CD4-positive, alpha-beta T cell (primary cell): ENCODE measurements at regions of chr16 and their contacts with region 1.

Region 1: GRCh38 chr16:50210266-50211038 is 55.9 kb upstream of the ADCY7 start:
- DNase-seq: peak; percentile 42 to 79 (median 58)
- ATAC-seq: peak; percentile 92
- H3K4me3 ChIP-seq: no peak overlapping the region
- H3K4me3 Mint-ChIP-seq: no peak overlapping the region
- H3K27ac ChIP-seq: peak overlapping the region in 1 of 2 donors; percentile 26
- H3K27ac Mint-ChIP-seq: peak overlapping the region; percentile 32
- H3K4me1 ChIP-seq: peaks cover 9% of the 10 kb centered on the region
- H3K4me1 Mint-ChIP-seq: peaks cover 50% of the 10 kb centered on the region
- H3K27me3 ChIP-seq: no peaks in the 10 kb centered on the region
- H3K27me3 Mint-ChIP-seq: no peaks in the 10 kb centered on the region
- CTCF ChIP-seq: peak; percentile 64

Region 2: DNA sequence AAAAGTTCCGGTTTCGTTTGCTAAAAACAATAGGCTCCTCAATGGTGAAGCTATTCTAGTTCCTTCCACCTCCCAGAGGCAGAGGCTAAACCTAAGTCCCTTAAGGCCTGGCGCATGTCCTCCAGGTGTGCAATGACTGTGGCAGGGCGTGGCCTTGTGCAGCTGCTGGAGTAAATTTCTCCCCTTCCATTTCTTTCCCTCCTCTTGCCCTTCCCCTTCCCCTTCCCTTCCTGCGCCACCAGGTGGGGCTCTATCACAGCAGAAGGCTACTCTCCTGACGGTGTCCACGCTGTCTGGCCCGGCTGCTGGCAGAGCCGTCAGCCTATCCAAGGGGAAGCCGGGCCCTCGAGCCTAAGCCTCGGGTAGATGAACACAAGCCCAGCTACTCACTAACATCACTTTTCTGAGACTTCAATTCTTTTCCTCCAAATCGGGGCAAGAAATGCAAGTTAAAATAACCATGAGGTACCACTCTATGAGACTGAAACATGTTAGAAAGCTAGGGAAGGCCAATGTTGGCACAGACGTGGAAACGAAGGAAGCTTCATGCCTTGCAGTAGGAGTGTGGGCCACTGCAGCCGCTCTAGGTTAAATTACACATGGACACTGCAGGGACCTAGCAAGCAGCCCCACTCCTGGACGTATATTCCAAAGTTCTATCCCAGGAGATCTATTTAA is 802.4 kb before region 1 on chr16:
- CTCF ChIA-PET with region 1: no interaction called
- POLR2A ChIA-PET with region 1: no interaction called
- intact Hi-C with region 1: loop called in 1 of 2 experiments (anchors 5 kb)
- DNase-seq: peak; percentile 45 to 77 (median 58)
- ATAC-seq: peak; percentile 74
- H3K4me3 ChIP-seq: no peak overlapping the region
- H3K4me3 Mint-ChIP-seq: no peak overlapping the region
- H3K27ac ChIP-seq: no peak overlapping the region
- H3K27ac Mint-ChIP-seq: no peak overlapping the region
- H3K4me1 ChIP-seq: peaks cover 6% of the 10 kb centered on the region
- H3K4me1 Mint-ChIP-seq: peaks cover 4% of the 10 kb centered on the region
- H3K27me3 ChIP-seq: no peaks in the 10 kb centered on the region
- H3K27me3 Mint-ChIP-seq: peaks cover 8% of the 10 kb centered on the region
- CTCF ChIP-seq: peak; percentile 75

Region 3: GRCh38 chr16:50065624-50066481 is 144.6 kb before region 1 on chr16 and contains the start of gene HEATR3:
- CTCF ChIA-PET with region 1: interaction called, 9 read pairs
- POLR2A ChIA-PET with region 1: interaction called, 11 read pairs
- intact Hi-C with region 1: loop called (anchors 2 to 5 kb)
- DNase-seq: peak; percentile 89 to 98 (median 95)
- ATAC-seq: peak; percentile 83
- H3K4me3 ChIP-seq: peak within 1 kb of the TSS; percentile 69
- H3K4me3 Mint-ChIP-seq: peak within 1 kb of the TSS; percentile 99
- H3K27ac ChIP-seq: peak within 1 kb of the TSS; percentile 69 to 85
- H3K27ac Mint-ChIP-seq: peak within 1 kb of the TSS; percentile 83
- H3K4me1 ChIP-seq: peaks cover 25% of the 10 kb centered on the region
- H3K4me1 Mint-ChIP-seq: peaks cover 53% of the 10 kb centered on the region
- H3K27me3 ChIP-seq: no peaks in the 10 kb centered on the region
- H3K27me3 Mint-ChIP-seq: no peaks in the 10 kb centered on the region
- CTCF ChIP-seq: no peak
- total RNA-seq, gene HEATR3: 10.1 to 10.6 TPM

Region 4: DNA sequence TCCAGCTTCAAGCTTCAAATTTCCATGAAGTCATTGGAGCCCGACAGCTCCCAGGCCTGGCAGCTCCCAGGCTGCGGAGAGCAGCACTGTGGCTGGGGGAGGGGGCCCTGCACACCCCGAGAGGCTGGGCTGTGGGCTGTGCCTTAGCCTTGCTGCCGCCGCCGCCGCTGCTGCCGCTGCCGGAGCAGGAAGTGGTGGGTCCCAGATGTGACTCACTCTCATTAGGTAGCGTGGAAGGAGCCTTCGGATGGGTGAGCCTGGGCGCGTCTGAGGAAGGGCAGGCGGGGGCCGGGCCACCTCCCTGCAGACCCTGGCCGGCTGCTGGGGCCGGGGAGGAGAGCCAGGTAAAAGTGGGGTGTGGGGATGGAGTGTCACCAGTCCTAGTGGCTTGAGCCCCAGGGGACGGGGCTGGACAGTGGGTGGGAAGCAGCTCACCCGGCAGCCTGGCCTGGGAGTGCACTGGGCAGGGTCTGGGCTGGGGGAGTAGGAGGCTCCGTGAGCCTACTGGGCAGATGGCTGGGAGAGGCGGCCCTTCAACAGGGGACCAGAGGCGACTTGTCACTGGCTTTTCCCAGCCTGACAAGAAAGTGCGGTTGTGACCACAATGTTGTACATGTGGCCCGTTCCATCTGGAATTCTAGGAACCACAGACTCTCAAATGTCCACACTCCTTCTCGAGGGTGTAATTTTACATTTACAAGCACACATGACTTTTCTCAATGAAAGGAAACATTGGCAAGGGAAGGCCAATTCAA is 56.1 kb after region 1 on chr16 and contains the start of gene ADCY7:
- CTCF ChIA-PET with region 1: interaction called, 4 read pairs
- POLR2A ChIA-PET with region 1: no interaction called
- intact Hi-C with region 1: loop called in 1 of 2 experiments (anchors 5 kb)
- DNase-seq: peak; percentile 66 to 90 (median 86)
- ATAC-seq: peak; percentile 91
- H3K4me3 ChIP-seq: peak within 1 kb of the TSS; percentile 98
- H3K4me3 Mint-ChIP-seq: peak within 1 kb of the TSS; percentile 99
- H3K27ac ChIP-seq: peak within 1 kb of the TSS; percentile 87 to 97
- H3K27ac Mint-ChIP-seq: peak within 1 kb of the TSS; percentile 100
- H3K4me1 ChIP-seq: peaks cover 65% of the 10 kb centered on the region
- H3K4me1 Mint-ChIP-seq: peaks cover 73% of the 10 kb centered on the region
- H3K27me3 ChIP-seq: no peaks in the 10 kb centered on the region
- H3K27me3 Mint-ChIP-seq: no peaks in the 10 kb centered on the region
- CTCF ChIP-seq: no peak
- total RNA-seq, gene ADCY7: 136 to 147 TPM

Region 5: GRCh38 chr16:50509521-50510341 is 299.3 kb after region 1 on chr16:
- CTCF ChIA-PET with region 1: no interaction called
- POLR2A ChIA-PET with region 1: no interaction called
- intact Hi-C with region 1: loop called in 1 of 2 experiments (anchors 10 kb)
- DNase-seq: peak in 12 of 14 experiments; percentile 5 to 65 (median 21)
- ATAC-seq: no peak
- H3K4me3 ChIP-seq: no peak overlapping the region
- H3K4me3 Mint-ChIP-seq: no peak overlapping the region
- H3K27ac ChIP-seq: no peak overlapping the region
- H3K27ac Mint-ChIP-seq: no peak overlapping the region
- H3K4me1 ChIP-seq: no peaks in the 10 kb centered on the region
- H3K4me1 Mint-ChIP-seq: no peaks in the 10 kb centered on the region
- H3K27me3 ChIP-seq: no peaks in the 10 kb centered on the region
- H3K27me3 Mint-ChIP-seq: no peaks in the 10 kb centered on the region
- CTCF ChIP-seq: peak; percentile 71